ENCODE measurements at regions of chr21 and their contacts with region 1.

Region 1: GRCh38 chr21:39137248-39138178 is 45.7 kb downstream of the PSMG1 start:
- DNase-seq: peak; percentile 84
- H3K4me3 Mint-ChIP-seq: no peak overlapping the region
- H3K27ac Mint-ChIP-seq: no peak overlapping the region
- H3K4me1 Mint-ChIP-seq: peaks cover 14% of the 10 kb centered on the region
- H3K27me3 Mint-ChIP-seq: no peaks in the 10 kb centered on the region
- CTCF ChIP-seq: no peak

Region 2: DNA sequence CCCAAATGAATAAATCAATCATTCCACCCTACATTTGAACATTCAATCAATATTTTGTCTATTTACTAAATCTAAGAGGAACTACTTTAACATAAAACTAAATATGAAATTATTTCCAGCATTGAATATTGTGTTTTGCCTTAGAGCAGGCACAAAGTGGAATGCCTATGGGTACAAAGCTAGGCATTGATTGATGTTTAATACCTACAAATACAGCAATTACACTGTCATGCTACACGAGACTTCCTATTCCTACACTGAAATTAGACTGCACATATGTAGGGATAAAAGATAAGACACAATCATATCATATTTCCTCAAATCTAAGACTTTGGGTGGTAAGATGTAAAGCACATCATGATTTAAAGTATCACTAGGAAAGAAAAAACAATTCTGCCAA is 626.3 kb before region 1 on chr21:
- CTCF ChIA-PET with region 1: interaction called, 11 read pairs
- POLR2A ChIA-PET with region 1: no interaction called
- intact Hi-C with region 1: no loop called
- DNase-seq: no peak
- H3K4me3 Mint-ChIP-seq: no peak overlapping the region
- H3K27ac Mint-ChIP-seq: no peak overlapping the region
- H3K4me1 Mint-ChIP-seq: no peaks in the 10 kb centered on the region
- H3K27me3 Mint-ChIP-seq: peaks cover 27% of the 10 kb centered on the region
- CTCF ChIP-seq: no peak

Region 3: GRCh38 chr21:38712071-38712470 is 425.4 kb before region 1 on chr21:
- CTCF ChIA-PET with region 1: interaction called, 11 read pairs
- POLR2A ChIA-PET with region 1: no interaction called
- intact Hi-C with region 1: no loop called
- DNase-seq: peak; percentile 61
- H3K4me3 Mint-ChIP-seq: no peak overlapping the region
- H3K27ac Mint-ChIP-seq: no peak overlapping the region
- H3K4me1 Mint-ChIP-seq: no peaks in the 10 kb centered on the region
- H3K27me3 Mint-ChIP-seq: no peaks in the 10 kb centered on the region
- CTCF ChIP-seq: peak; percentile 42

Region 4: GRCh38 chr21:38811257-38811656 is 326.3 kb before region 1 on chr21:
- CTCF ChIA-PET with region 1: interaction called, 18 read pairs
- POLR2A ChIA-PET with region 1: interaction called, 10 read pairs
- intact Hi-C with region 1: no loop called
- DNase-seq: peak; percentile 96
- H3K4me3 Mint-ChIP-seq: peak overlapping the region; percentile 97
- H3K27ac Mint-ChIP-seq: peak overlapping the region; percentile 83
- H3K4me1 Mint-ChIP-seq: peaks cover 33% of the 10 kb centered on the region
- H3K27me3 Mint-ChIP-seq: no peaks in the 10 kb centered on the region
- CTCF ChIP-seq: no peak